Activated CD4-positive, alpha-beta T cell treated with anti-CD3 and anti-CD28 coated beads for 36 hours (primary cell): ENCODE measurements at regions of chr3 and their contacts with region 1.

Region 1: DNA sequence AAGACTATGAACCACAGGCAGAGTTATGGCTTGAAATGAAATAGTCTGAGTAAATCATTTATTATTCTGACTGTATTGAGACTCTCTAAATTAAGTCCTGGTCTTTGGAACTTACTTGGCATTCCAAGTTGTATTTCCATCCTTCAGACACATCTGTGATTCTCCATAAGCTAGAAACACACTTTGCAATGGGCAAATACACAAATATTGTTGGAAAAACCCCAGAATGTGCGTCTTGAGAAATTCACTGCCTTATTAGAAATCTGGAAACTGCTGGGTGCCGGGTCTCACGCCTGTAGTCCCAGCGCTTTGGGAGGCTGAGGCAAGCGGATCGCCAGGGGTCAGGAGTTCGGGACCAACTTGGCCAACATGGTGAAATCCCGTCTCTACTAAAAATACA is 87.8 kb downstream of the WWTR1 start:
- DNase-seq: no peak
- ATAC-seq: no peak
- H3K4me3 Mint-ChIP-seq: no peak overlapping the region
- H3K27ac Mint-ChIP-seq: no peak overlapping the region
- H3K4me1 Mint-ChIP-seq: peaks cover 8% of the 10 kb centered on the region
- H3K27me3 Mint-ChIP-seq: no peaks in the 10 kb centered on the region

Region 2: GRCh38 chr3:149581681-149582370 is 11.8 kb after region 1 on chr3:
- CTCF ChIA-PET with region 1: interaction called, 21 read pairs
- POLR2A ChIA-PET with region 1: no interaction called
- intact Hi-C with region 1: no loop called
- DNase-seq: peak; percentile 11
- ATAC-seq: no peak
- H3K4me3 Mint-ChIP-seq: no peak overlapping the region
- H3K27ac Mint-ChIP-seq: no peak overlapping the region
- H3K4me1 Mint-ChIP-seq: peaks cover 22% of the 10 kb centered on the region
- H3K27me3 Mint-ChIP-seq: peaks cover 22% of the 10 kb centered on the region